ENCODE measurements at regions of chrX and their contacts with region 1.

Region 1: GRCh38 chrX:40108959-40109287 is 11.2 kb upstream of the BCOR start:
- DNase-seq: peak; percentile 64 to 85 (median 74)
- ATAC-seq: peak; percentile 64
- H3K4me3 ChIP-seq: peak overlapping the region; percentile 66
- H3K27ac ChIP-seq: peak overlapping the region; percentile 95
- H3K4me1 ChIP-seq: peaks cover 44 to 65% of the 10 kb centered on the region in 2 experiments
- H3K27me3 ChIP-seq: no peaks in the 10 kb centered on the region
- CTCF ChIP-seq: no peak
- EP300 ChIP-seq: no peak
- POLR2A ChIP-seq: no peak
- RAD21 ChIP-seq: 0 out of 4 replicates have a peak, but pooled peaks of 1 of the 2 experiments have one; percentile 12

Region 2: GRCh38 chrX:39730662-39731397 is 378.1 kb before region 1 on chrX:
- CTCF ChIA-PET with region 1: no interaction called
- POLR2A ChIA-PET with region 1: no interaction called
- in situ Hi-C with region 1: no loop called
- intact Hi-C with region 1: loop called (anchors 10 kb)
- DNase-seq: peak; percentile 67 to 77 (median 70)
- ATAC-seq: peak; percentile 95
- H3K4me3 ChIP-seq: peak overlapping the region; percentile 16; the same call in 1 of the 2 replicates
- H3K27ac ChIP-seq: peak overlapping the region; percentile 28; the same call in 1 of the 3 replicates
- H3K4me1 ChIP-seq: peaks cover 8 to 9% of the 10 kb centered on the region in 2 experiments; a peak in 4 of 5 replicates
- H3K27me3 ChIP-seq: no peaks in the 10 kb centered on the region
- CTCF ChIP-seq: peak; percentile 65 to 75 (median 73)
- EP300 ChIP-seq: no peak
- POLR2A ChIP-seq: no peak
- RAD21 ChIP-seq: peak; percentile 79 to 80

Region 3: DNA sequence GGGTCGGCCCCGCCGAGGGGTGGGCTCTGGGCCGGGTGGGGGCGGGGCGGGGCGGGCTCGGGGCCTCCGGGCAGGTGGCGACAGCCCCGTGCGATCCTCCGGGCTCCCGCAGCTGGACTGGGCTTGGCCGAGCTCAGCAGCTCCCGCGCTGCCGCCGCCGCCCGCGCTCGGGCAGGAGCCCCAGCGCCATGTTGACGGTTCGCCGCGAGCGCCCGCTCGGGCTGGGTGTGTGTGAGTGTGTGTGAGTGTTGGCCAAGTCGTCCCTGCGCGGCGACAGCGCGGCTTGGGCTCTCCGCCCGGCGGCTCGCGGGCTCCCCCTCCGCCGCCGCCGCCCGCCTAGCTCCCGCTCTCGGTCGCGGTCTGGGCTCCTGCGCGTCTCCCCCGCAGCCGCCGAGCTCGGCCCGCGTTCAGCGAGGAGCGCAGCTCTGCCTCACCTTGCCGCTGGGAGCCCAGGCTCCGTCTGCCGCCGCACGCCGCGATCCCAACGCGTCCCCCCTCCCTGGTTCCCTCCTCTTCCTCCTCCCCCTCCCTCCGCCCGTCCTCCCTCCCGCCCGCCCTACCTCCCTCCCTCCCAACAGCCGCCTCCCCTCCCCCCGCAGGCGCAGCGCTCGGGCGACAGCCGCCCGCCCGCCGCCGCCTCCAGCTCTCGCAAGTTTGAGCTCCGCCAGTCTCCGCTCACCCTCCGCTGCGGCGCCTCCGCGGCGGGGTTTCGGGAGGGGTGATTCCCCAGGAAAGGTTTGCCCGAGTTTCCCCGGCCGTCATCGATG is 11.2 kb before region 1 on chrX and contains the start of gene BCOR:
- CTCF ChIA-PET with region 1: no interaction called
- POLR2A ChIA-PET with region 1: interaction called, 18 read pairs
- in situ Hi-C with region 1: no loop called
- intact Hi-C with region 1: no loop called
- DNase-seq: peak; percentile 58 to 89 (median 72)
- ATAC-seq: peak; percentile 27
- H3K4me3 ChIP-seq: peak within 1 kb of the TSS; percentile 70
- H3K27ac ChIP-seq: peak within 1 kb of the TSS; percentile 92
- H3K4me1 ChIP-seq: peaks cover 39 to 71% of the 10 kb centered on the region in 2 experiments
- H3K27me3 ChIP-seq: no peaks in the 10 kb centered on the region
- CTCF ChIP-seq: no peak
- EP300 ChIP-seq: no peak
- POLR2A ChIP-seq: peak; percentile 73
- RAD21 ChIP-seq: no peak; a peak in 1 of 4 replicates
- polyA plus RNA-seq, gene BCOR: 32.0 to 37.4 TPM

Region 4: GRCh38 chrX:40153335-40154249 is 44.7 kb after region 1 on chrX:
- CTCF ChIA-PET with region 1: no interaction called
- POLR2A ChIA-PET with region 1: interaction called, 12 read pairs
- in situ Hi-C with region 1: loop called (anchors 10 kb)
- intact Hi-C with region 1: loop called (anchors 2 kb)
- DNase-seq: peak; percentile 64 to 75 (median 67)
- ATAC-seq: peak; percentile 37
- H3K4me3 ChIP-seq: peak overlapping the region; percentile 45
- H3K27ac ChIP-seq: peak overlapping the region; percentile 97
- H3K4me1 ChIP-seq: peaks cover 34 to 83% of the 10 kb centered on the region in 2 experiments
- H3K27me3 ChIP-seq: no peaks in the 10 kb centered on the region
- CTCF ChIP-seq: peak in 2 of 3 experiments; percentile 10 to 26; a peak in 2 of 6 replicates
- EP300 ChIP-seq: no peak
- POLR2A ChIP-seq: peak; percentile 55
- RAD21 ChIP-seq: no peak

Region 5: GRCh38 chrX:40244980-40245379 is 136.1 kb after region 1 on chrX:
- CTCF ChIA-PET with region 1: no interaction called
- POLR2A ChIA-PET with region 1: no interaction called
- in situ Hi-C with region 1: no loop called
- intact Hi-C with region 1: loop called (anchors 5 kb)
- DNase-seq: no peak
- ATAC-seq: peak; percentile 44
- H3K4me3 ChIP-seq: no peak overlapping the region
- H3K27ac ChIP-seq: no peak overlapping the region
- H3K4me1 ChIP-seq: peaks cover 3 to 44% of the 10 kb centered on the region in 2 experiments; a peak in 4 of 5 replicates
- H3K27me3 ChIP-seq: no peaks in the 10 kb centered on the region
- CTCF ChIP-seq: no peak
- EP300 ChIP-seq: no peak
- POLR2A ChIP-seq: no peak
- RAD21 ChIP-seq: no peak

Region 6: GRCh38 chrX:40266490-40267333 is 157.8 kb after region 1 on chrX:
- CTCF ChIA-PET with region 1: no interaction called
- POLR2A ChIA-PET with region 1: no interaction called
- in situ Hi-C with region 1: loop called (anchors 10 kb)
- intact Hi-C with region 1: loop called (anchors 2 kb)
- DNase-seq: peak; percentile 68 to 77 (median 72)
- ATAC-seq: peak; percentile 92
- H3K4me3 ChIP-seq: peak overlapping the region; percentile 34
- H3K27ac ChIP-seq: peak overlapping the region; percentile 57; the same call in 2 of the 3 replicates
- H3K4me1 ChIP-seq: peaks cover 17 to 32% of the 10 kb centered on the region in 2 experiments; a peak in 4 of 5 replicates
- H3K27me3 ChIP-seq: no peaks in the 10 kb centered on the region
- CTCF ChIP-seq: peak; percentile 75 to 82 (median 75)
- EP300 ChIP-seq: peak; percentile 48; the same call in 1 of the 2 replicates
- POLR2A ChIP-seq: no peak
- RAD21 ChIP-seq: peak; percentile 82 to 84